ENCODE measurements at regions of chr7 and their contacts with region 1.

Region 1: DNA sequence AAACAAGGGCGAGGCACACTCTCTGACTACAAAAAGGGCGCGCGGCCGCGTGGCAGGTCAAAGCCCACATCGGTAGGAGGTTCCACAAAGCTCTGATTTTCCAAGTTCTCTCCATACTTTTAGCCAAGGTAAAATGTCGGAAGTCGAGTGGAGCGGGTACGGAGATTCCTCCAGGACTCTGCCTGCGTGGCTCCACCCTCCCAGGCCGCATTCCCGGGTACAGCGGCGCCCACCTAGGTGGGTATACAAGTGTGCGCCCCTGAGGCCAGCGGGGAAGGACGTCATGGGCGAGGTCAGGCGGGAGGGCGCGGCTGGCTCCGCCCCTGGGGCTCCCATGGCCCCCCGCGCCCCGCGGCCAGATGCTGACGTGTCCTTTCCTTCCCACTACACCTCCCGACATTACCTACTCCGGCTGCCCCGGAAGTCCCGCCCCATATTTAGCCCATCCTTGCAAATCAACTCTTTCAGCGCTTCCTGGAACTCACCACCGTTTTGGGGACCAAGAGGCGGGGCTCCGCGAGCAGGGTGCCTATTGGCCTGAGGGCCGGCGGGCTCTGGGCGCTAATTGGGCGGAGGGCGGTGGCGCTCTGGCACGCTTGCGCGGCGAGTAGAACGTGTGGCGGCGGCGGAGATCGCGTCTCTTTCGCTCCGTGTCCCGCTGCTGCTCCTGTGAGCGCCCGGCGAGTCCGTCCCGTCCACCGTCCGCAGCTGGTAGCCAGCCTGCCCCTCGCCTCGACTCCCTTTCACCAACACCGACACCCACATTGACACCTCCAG is at the start of gene SND1:
- DNase-seq: peak; percentile 99
- H3K4me3 Mint-ChIP-seq: peak within 1 kb of the TSS; percentile 100
- H3K27ac Mint-ChIP-seq: peak within 1 kb of the TSS; percentile 98
- H3K4me1 Mint-ChIP-seq: peaks cover 49% of the 10 kb centered on the region
- H3K27me3 Mint-ChIP-seq: peaks cover 6% of the 10 kb centered on the region
- total RNA-seq, gene SND1: 281 and 292 TPM in 2 replicates

Region 2: DNA sequence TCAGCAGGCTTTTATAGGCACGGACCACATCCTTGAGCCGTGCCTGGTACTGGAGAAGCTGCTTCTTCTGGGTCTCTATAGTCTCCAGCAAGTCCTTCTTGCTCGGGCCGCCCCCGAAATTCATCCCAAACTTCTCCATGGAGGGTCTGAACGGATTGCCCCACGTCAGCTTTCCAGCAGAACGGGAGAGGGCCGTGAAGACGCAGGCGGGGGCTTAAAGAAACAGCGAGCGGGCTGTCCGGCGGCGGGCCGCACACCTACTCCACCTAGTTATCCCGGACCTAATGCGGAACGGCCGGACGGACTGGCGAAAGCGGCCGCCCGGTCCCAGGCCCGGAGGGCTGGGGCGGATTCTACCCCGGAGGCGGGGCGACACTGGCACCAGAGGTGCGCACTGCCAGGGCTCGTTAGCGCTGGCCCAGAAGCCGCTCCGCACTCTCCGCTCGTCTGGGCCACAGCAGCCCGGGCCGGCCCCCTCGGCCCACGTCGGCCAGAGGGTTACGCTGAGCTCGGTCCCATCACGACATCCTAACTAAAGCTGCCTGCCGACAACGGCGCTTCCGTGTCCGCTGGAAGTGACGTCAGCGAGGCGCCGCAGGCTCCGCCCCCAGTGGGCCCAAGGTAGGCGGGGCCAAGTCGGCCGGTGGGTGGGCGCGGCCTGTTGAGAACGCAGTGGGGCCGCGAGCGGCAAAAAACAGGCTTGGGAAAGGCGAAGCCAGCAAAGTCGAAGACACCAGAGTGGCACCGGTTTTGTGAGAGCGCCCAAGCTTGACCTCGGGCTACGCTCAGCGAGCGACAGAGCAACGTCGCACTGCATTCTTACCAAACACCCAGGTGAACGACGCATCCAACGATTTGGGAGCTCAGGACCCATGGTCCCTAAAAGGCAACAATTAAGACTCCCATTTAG is 66.4 kb before region 1 on chr7 and contains the start of gene GCC1:
- intact Hi-C with region 1: loop called (anchors 1 kb)
- DNase-seq: peak; percentile 92
- H3K4me3 Mint-ChIP-seq: peak within 1 kb of the TSS; percentile 95
- H3K27ac Mint-ChIP-seq: peak within 1 kb of the TSS; percentile 89
- H3K4me1 Mint-ChIP-seq: peaks cover 59% of the 10 kb centered on the region
- H3K27me3 Mint-ChIP-seq: peaks cover 3% of the 10 kb centered on the region
- total RNA-seq, gene GCC1: 16.8 and 17.4 TPM in 2 replicates

Region 3: GRCh38 chr7:127678947-127679346 is 27.2 kb after region 1 on chr7:
- intact Hi-C with region 1: loop called (anchors 2 kb)
- DNase-seq: peak; percentile 5
- H3K4me3 Mint-ChIP-seq: peak overlapping the region; percentile 36
- H3K27ac Mint-ChIP-seq: peak overlapping the region; percentile 77
- H3K4me1 Mint-ChIP-seq: peaks cover 66% of the 10 kb centered on the region
- H3K27me3 Mint-ChIP-seq: no peaks in the 10 kb centered on the region

Region 4: DNA sequence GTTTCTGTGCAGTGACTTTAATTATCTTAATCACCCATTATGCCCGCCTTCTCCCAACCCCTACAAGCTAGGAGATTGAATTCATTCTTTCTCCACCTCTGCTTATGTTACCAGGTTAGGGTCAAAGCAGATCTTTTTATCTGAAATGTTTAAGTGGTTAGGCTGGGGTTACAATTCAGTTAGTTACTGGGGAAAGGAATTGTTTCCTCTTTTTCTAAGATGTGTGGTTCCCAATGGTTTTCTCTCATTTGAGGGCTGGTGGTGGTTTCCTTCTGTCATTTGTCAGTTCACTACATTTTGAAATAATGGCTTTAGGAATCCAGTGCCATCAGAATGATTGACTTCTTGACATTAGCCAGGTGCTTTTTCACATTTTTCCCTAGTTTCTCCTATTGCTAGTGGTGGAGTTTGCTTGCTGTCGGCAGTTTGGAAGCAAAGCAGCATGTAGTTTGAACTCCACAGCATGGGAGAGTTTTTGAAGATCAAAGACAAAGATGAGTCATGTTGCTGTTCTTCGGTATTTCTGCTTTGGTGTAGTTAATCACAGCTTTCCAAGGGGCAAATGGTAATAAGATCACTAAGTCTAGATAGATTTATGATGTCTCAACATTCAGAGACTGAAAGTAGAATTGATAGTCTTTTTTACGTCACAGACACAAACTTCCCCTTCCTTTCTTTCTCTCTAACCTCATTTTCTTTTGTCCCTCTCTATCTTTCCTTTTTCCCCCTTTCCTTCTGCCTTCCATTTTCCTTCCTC is 168.4 kb after region 1 on chr7:
- intact Hi-C with region 1: no loop called
- DNase-seq: no peak
- H3K4me3 Mint-ChIP-seq: peak overlapping the region; percentile 3
- H3K27ac Mint-ChIP-seq: peak overlapping the region; percentile 37
- H3K4me1 Mint-ChIP-seq: peaks cover 46% of the 10 kb centered on the region
- H3K27me3 Mint-ChIP-seq: no peaks in the 10 kb centered on the region

Region 5: GRCh38 chr7:128135515-128136214 is 483.9 kb after region 1 on chr7:
- intact Hi-C with region 1: loop called (anchors 5 kb)
- DNase-seq: peak; percentile 53
- H3K4me3 Mint-ChIP-seq: peak overlapping the region; percentile 77
- H3K27ac Mint-ChIP-seq: no peak overlapping the region
- H3K4me1 Mint-ChIP-seq: peaks cover 14% of the 10 kb centered on the region
- H3K27me3 Mint-ChIP-seq: peaks cover 60% of the 10 kb centered on the region

Region 6: GRCh38 chr7:128409596-128410160 is 757.9 kb after region 1 on chr7 and contains the start of gene IMPDH1:
- intact Hi-C with region 1: loop called (anchors 5 kb)
- DNase-seq: peak; percentile 82
- H3K4me3 Mint-ChIP-seq: peak within 1 kb of the TSS; percentile 93
- H3K27ac Mint-ChIP-seq: peak within 1 kb of the TSS; percentile 80
- H3K4me1 Mint-ChIP-seq: peaks cover 36% of the 10 kb centered on the region
- H3K27me3 Mint-ChIP-seq: peaks cover 25% of the 10 kb centered on the region
- total RNA-seq, gene IMPDH1: 91.7 and 95.8 TPM in 2 replicates

Region 7: DNA sequence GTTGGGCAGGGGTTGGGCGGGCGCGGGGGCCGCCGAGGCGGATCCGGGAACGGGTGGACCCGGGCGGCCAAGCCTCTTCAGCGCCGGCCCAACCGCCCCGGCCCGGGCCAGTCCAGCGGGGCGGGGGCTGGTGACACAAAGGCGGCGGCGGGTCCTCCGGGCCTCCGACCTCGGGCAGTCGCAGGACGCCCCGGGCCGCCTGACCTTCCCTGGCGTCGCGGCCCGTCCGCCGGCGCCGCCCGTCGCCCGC is 879.0 kb after region 1 on chr7:
- intact Hi-C with region 1: loop called (anchors 10 kb)
- DNase-seq: no peak
- H3K4me3 Mint-ChIP-seq: no peak overlapping the region
- H3K27ac Mint-ChIP-seq: no peak overlapping the region
- H3K4me1 Mint-ChIP-seq: peaks cover 40% of the 10 kb centered on the region
- H3K27me3 Mint-ChIP-seq: no peaks in the 10 kb centered on the region